Activated CD4-positive, alpha-beta T cell treated with anti-CD3 and anti-CD28 coated beads for 36 hours (primary cell): ENCODE measurements at regions of chr16 and their contacts with region 1.

Region 1: DNA sequence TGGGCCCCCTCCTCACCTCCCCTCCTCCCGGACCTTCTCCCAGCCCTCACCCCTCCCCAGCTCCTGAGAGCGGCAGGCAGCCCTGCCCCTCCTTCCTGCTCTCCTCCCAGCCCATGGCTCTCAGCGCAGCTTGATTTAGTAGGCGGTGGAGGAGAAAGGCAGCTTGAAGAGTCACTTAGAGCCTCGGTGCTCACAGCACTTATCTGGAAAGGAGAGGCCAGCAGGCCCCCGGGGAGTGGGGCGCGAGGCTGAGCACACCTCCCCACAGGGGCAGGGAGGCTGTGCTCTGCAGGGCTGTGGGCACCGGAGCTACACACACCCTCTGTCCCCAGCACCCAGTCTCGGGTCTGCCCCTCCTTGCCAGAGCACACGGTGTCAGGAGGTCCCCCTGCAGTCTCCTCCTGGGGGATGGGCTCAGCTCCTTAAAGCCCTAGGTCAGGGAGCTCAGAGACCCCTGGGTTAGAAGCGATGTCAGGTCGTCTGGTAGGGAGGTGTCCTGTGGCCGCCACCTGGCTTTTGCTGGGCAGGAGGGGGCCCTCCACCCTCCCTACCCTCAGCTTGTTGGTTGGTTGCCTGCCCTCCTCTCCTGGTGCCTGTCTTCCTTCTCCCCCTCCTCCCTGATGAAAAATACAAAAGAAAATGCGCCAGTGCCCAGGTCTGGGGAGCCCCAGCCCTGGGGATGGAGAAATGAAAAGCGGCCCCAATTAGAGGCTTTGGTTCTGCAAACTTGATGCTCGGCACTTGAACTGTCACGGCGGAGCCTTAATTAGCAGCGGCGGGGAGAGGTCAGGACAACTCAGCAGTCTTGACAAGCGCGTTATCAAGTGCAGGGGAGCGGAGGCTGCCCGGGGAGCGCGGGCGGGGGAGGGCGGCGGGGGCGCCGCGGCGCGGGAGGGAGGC is 151.1 kb upstream of the GSE1 start:
- DNase-seq: peak; percentile 37
- ATAC-seq: peak; percentile 50
- H3K4me3 Mint-ChIP-seq: peak overlapping the region; percentile 43
- H3K27ac Mint-ChIP-seq: no peak overlapping the region
- H3K4me1 Mint-ChIP-seq: peaks cover 5% of the 10 kb centered on the region
- H3K27me3 Mint-ChIP-seq: peaks cover 12% of the 10 kb centered on the region

Region 2: DNA sequence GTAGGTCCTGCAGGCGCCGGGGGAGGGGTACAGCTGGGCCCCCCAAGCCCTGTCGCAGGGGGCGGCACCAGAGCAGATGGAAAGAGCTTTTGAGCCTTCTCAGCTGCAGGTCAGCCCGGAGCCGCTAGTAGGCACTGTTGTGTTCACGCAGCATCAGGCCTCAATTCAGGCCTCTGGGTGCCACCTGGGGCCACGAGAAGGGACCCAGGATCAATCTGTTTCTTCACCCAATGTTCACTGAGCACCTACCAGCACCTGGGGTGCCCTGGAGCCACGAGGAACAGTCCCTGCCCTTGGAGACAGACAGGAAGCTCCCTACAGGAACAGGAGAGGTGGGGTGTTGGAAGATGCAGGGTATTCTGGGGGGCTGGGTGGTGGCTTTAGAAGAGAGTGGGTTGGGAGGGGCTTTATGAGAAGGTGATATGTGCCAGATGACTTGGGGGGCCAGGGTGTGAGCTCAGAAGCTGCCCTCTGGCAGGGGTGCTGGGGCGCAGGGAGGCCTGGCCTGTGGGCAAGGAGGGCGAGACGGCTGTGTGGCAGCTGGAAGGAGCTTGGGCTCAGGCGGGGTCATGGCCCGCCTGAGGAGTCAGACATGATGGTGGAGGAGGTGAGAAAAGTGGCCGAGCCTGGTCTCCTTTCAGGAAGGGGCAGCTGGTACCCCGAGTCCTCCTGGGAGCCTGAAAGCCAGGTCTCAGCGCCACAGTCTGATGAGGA is 29.2 kb after region 1 on chr16:
- CTCF ChIA-PET with region 1: no interaction called
- POLR2A ChIA-PET with region 1: no interaction called
- intact Hi-C with region 1: no loop called
- DNase-seq: peak; percentile 69
- ATAC-seq: peak; percentile 60
- H3K4me3 Mint-ChIP-seq: no peak overlapping the region
- H3K27ac Mint-ChIP-seq: no peak overlapping the region
- H3K4me1 Mint-ChIP-seq: peaks cover 1% of the 10 kb centered on the region
- H3K27me3 Mint-ChIP-seq: peaks cover 3% of the 10 kb centered on the region

Region 3: GRCh38 chr16:85514595-85515318 is 52.7 kb after region 1 on chr16:
- CTCF ChIA-PET with region 1: no interaction called
- POLR2A ChIA-PET with region 1: no interaction called
- intact Hi-C with region 1: no loop called
- DNase-seq: no peak
- ATAC-seq: no peak
- H3K4me3 Mint-ChIP-seq: no peak overlapping the region
- H3K27ac Mint-ChIP-seq: no peak overlapping the region
- H3K4me1 Mint-ChIP-seq: no peaks in the 10 kb centered on the region
- H3K27me3 Mint-ChIP-seq: no peaks in the 10 kb centered on the region

Region 4: GRCh38 chr16:85528528-85529387 is 66.7 kb after region 1 on chr16:
- CTCF ChIA-PET with region 1: no interaction called
- POLR2A ChIA-PET with region 1: no interaction called
- intact Hi-C with region 1: loop called in 1 of 2 experiments (anchors 10 kb)
- DNase-seq: peak; percentile 55
- ATAC-seq: peak; percentile 63
- H3K4me3 Mint-ChIP-seq: no peak overlapping the region
- H3K27ac Mint-ChIP-seq: no peak overlapping the region
- H3K4me1 Mint-ChIP-seq: no peaks in the 10 kb centered on the region
- H3K27me3 Mint-ChIP-seq: no peaks in the 10 kb centered on the region